HEK293 (cell line): ENCODE measurements at regions of chr6 and their contacts with region 1.

Region 1: DNA sequence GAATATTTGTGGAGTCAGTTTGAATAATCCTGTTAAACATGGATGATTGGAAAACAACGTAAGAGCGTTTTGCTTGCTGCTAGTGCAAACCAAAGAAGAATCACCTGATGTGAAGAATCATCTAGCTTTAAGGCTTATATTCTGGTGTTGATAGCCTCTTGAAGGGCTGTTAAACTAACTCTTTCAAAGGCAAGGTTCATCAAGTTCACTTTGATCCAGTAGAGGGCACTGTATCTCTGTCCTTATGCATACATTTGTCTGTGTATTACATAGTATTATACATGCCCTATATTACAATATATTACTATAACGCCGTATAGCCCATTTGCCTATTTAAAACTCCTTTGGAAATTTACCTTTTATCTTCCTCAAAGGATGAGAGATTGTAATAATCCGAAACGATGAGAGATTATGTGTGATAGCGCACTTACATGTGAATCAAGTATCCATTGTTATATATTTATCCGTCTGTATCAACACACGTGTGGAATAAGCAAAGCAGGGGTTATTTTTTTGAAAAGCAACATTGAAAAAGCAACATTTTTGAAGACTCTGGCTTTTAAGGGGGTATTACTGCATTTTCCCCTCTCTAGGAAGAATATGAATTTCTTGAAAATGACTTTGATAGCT is 50.8 kb upstream of the NRN1 start:
- H3K4me3 ChIP-seq: no peak overlapping the region
- H3K27ac ChIP-seq: no peak overlapping the region
- H3K4me1 ChIP-seq: no peaks in the 10 kb centered on the region
- CTCF ChIP-seq: 0 out of 2 replicates have a peak, but pooled peaks have one; percentile 15

Region 2: DNA sequence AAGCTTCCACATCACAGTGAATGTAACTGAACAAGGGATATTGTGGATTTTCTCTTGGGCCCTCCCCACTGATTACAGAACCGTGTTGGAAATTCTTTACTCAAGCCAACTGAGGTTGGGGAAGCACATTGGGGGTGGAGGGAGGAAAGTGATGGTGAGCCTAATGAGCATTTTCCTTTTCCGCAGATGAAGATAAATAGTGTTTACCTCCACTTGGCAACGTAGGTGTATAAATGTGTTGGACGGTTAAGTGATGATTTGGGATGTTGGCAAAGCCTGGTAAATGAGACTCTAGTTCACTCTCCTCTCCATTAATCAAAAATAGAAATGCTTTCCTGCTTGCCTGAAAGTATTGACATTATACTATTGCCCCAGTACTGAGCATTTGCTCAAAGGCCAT is 23.7 kb before region 1 on chr6:
- CTCF ChIA-PET with region 1: no interaction called
- POLR2A ChIA-PET with region 1: no interaction called
- H3K4me3 ChIP-seq: no peak overlapping the region
- H3K27ac ChIP-seq: no peak overlapping the region
- H3K4me1 ChIP-seq: no peaks in the 10 kb centered on the region
- CTCF ChIP-seq: no peak

Region 3: GRCh38 chr6:6191475-6191874 is 133.9 kb after region 1 on chr6:
- CTCF ChIA-PET with region 1: no interaction called
- POLR2A ChIA-PET with region 1: no interaction called
- H3K4me3 ChIP-seq: no peak overlapping the region
- H3K27ac ChIP-seq: no peak overlapping the region
- H3K4me1 ChIP-seq: no peaks in the 10 kb centered on the region
- CTCF ChIP-seq: no peak

Region 4: GRCh38 chr6:6494677-6495076 is 437.1 kb after region 1 on chr6:
- CTCF ChIA-PET with region 1: interaction called, 32 read pairs
- POLR2A ChIA-PET with region 1: no interaction called
- H3K4me3 ChIP-seq: no peak overlapping the region
- H3K27ac ChIP-seq: no peak overlapping the region
- H3K4me1 ChIP-seq: no peaks in the 10 kb centered on the region
- CTCF ChIP-seq: no peak